ENCODE measurements at regions of chr19 and their contacts with region 1.

Region 1: GRCh38 chr19:11738746-11739620 is at the start of gene ZNF823:
- DNase-seq: peak; percentile 99
- H3K4me3 Mint-ChIP-seq: peak within 1 kb of the TSS; percentile 98
- H3K27ac Mint-ChIP-seq: peak within 1 kb of the TSS; percentile 81
- H3K4me1 Mint-ChIP-seq: peaks cover 22% of the 10 kb centered on the region
- H3K27me3 Mint-ChIP-seq: no peaks in the 10 kb centered on the region
- total RNA-seq, gene ZNF823: 3.2 to 3.9 TPM

Region 2: GRCh38 chr19:11694533-11695439 is 44.2 kb before region 1 on chr19:
- CTCF ChIA-PET with region 1: interaction called, 9 read pairs
- POLR2A ChIA-PET with region 1: no interaction called
- intact Hi-C with region 1: loop called (anchors 2 kb)
- DNase-seq: peak; percentile 92
- H3K4me3 Mint-ChIP-seq: peak overlapping the region; percentile 87
- H3K27ac Mint-ChIP-seq: no peak overlapping the region
- H3K4me1 Mint-ChIP-seq: peaks cover 6% of the 10 kb centered on the region
- H3K27me3 Mint-ChIP-seq: peaks cover 31% of the 10 kb centered on the region

Region 3: DNA sequence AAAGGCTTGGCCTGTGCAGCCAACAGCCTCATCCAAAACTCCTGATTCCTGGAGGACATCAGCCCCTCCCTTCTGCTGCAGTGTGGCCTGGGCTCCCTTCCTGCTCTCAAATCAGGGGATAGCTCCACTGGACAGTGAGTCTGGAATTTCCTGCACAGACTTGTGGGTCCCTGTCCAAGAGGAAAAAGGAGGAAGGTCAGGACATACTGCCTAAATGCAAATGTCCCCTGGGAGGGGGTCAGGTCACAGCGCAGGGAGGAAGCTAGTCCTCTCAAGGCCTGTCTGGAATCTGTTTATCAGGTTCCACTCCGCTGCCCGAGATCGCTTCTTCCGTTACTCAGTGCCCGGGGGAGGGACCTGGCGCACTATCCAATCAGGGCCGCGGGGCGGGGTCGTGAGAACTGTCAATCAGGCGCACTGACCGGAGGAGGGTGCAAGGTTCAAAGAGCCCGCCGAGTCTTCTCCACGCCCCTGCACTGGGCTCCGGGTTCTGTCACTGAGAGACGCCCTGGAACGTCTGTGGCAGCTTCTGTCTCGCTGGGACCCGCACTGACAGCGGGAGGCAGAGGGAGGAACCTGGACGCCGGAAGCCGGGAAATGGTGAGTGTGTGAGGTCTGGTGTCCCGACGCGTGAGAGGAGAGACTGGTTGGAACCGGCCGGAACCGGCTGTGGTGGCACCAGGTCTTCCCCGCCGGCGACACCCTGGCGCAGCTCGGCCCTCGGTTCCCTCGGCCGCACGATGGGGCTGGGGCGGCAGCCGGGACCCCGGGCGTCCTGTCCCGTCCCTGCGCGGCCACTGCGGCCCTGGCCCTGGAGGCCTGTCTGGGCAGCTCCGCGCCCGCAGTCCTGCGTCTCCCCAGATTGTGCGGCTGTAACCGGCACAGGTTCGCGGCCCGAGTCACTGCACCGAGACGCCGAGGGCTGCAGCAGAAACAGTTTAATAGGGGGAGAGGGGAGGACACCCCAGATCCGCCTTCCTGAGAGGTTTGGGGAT is 27.9 kb after region 1 on chr19 and contains the start of gene ZNF441:
- CTCF ChIA-PET with region 1: no interaction called
- POLR2A ChIA-PET with region 1: interaction called, 4 read pairs
- intact Hi-C with region 1: loop called (anchors 2 kb)
- DNase-seq: peak; percentile 97
- H3K4me3 Mint-ChIP-seq: peak within 1 kb of the TSS; percentile 98
- H3K27ac Mint-ChIP-seq: peak within 1 kb of the TSS; percentile 95
- H3K4me1 Mint-ChIP-seq: peaks cover 16% of the 10 kb centered on the region
- H3K27me3 Mint-ChIP-seq: peaks cover 5% of the 10 kb centered on the region
- total RNA-seq, gene ZNF441: 6.4 TPM

Region 4: DNA sequence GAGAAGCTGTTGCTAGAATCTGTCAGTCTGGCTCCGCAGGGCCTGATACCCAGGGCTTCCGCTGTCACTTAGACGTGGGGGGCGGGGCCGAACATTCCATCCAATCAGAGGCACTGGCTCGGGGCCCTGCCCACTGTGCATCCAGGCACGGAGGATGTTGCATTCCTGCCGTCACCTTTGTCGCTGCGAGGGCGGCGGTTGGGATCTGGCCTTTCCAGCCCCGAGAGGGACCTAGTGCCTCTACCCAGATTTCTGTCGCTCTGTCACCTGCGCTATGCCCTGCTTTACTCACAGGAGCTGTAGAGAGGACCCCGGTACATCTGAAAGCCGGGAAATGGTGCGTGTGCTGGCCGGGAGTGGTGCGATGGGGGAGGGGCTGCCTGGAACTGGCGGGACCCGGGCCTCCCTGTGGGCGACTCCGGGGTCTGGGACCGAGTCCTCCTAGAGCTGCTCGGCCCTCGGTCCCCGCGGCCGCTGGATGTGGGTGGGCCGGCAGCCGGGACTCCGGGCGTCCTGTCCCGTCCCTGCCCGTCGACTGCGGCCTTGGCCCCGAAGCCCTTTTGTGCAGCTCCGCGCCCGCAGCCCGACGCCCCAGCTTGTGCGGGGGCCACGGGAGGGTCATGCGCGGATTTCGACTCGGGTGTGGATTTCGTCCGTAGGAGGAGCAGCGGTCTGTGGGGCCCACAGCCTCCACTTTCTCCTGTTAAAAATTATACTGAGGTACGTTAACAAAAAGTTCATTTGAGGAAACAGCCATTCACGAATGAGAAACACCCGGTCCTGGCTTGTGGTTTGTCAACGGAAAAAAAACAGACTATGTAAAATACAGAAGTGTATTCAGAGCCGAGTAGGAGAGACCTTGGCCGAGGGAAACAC is 109.8 kb after region 1 on chr19 and contains the start of gene ZNF439:
- CTCF ChIA-PET with region 1: no interaction called
- POLR2A ChIA-PET with region 1: no interaction called
- intact Hi-C with region 1: loop called (anchors 1 kb)
- DNase-seq: peak; percentile 94
- H3K4me3 Mint-ChIP-seq: peak within 1 kb of the TSS; percentile 83
- H3K27ac Mint-ChIP-seq: peak within 1 kb of the TSS; percentile 66
- H3K4me1 Mint-ChIP-seq: peaks cover 17% of the 10 kb centered on the region
- H3K27me3 Mint-ChIP-seq: no peaks in the 10 kb centered on the region
- total RNA-seq, gene ZNF439: 4.8 to 5.6 TPM